ENCODE measurements at regions of chr3 and their contacts with region 1.

Region 1: GRCh38 chr3:158790901-158791589 is 10.8 kb upstream of the MFSD1 start:
- DNase-seq: peak in 4 of 9 experiments; percentile 17 to 75 (median 44)
- ATAC-seq: peak; percentile 65
- H3K4me3 ChIP-seq: no peak overlapping the region
- H3K4me3 Mint-ChIP-seq: no peak overlapping the region
- H3K27ac ChIP-seq: no peak overlapping the region
- H3K27ac Mint-ChIP-seq: no peak overlapping the region
- H3K4me1 ChIP-seq: peaks cover 3% of the 10 kb centered on the region
- H3K4me1 Mint-ChIP-seq: peaks cover 3% of the 10 kb centered on the region
- H3K27me3 ChIP-seq: no peaks in the 10 kb centered on the region
- H3K27me3 Mint-ChIP-seq: no peaks in the 10 kb centered on the region
- CTCF ChIP-seq: peak; percentile 85

Region 2: GRCh38 chr3:157606011-157606851 is 1184.8 kb before region 1 on chr3:
- CTCF ChIA-PET with region 1: no interaction called
- POLR2A ChIA-PET with region 1: no interaction called
- intact Hi-C with region 1: loop called in 1 of 2 experiments (anchors 5 kb)
- DNase-seq: peak; percentile 5 to 67 (median 55)
- ATAC-seq: peak; percentile 77
- H3K4me3 ChIP-seq: no peak overlapping the region
- H3K4me3 Mint-ChIP-seq: no peak overlapping the region
- H3K27ac ChIP-seq: no peak overlapping the region
- H3K27ac Mint-ChIP-seq: no peak overlapping the region
- H3K4me1 ChIP-seq: no peaks in the 10 kb centered on the region
- H3K4me1 Mint-ChIP-seq: peaks cover 8% of the 10 kb centered on the region
- H3K27me3 ChIP-seq: no peaks in the 10 kb centered on the region
- H3K27me3 Mint-ChIP-seq: peaks cover 6% of the 10 kb centered on the region
- CTCF ChIP-seq: peak; percentile 80

Region 3: GRCh38 chr3:157624801-157625200 is 1166.2 kb before region 1 on chr3:
- CTCF ChIA-PET with region 1: no interaction called
- POLR2A ChIA-PET with region 1: no interaction called
- intact Hi-C with region 1: loop called in 1 of 2 experiments (anchors 5 kb)
- DNase-seq: no peak
- ATAC-seq: no peak
- H3K4me3 ChIP-seq: no peak overlapping the region
- H3K4me3 Mint-ChIP-seq: no peak overlapping the region
- H3K27ac ChIP-seq: no peak overlapping the region
- H3K27ac Mint-ChIP-seq: no peak overlapping the region
- H3K4me1 ChIP-seq: no peaks in the 10 kb centered on the region
- H3K4me1 Mint-ChIP-seq: no peaks in the 10 kb centered on the region
- H3K27me3 ChIP-seq: no peaks in the 10 kb centered on the region
- H3K27me3 Mint-ChIP-seq: peaks cover 10% of the 10 kb centered on the region
- CTCF ChIP-seq: no peak

Region 4: GRCh38 chr3:158379517-158379916 is 411.5 kb before region 1 on chr3:
- CTCF ChIA-PET with region 1: no interaction called
- POLR2A ChIA-PET with region 1: no interaction called
- intact Hi-C with region 1: no loop called
- DNase-seq: no peak
- ATAC-seq: no peak
- H3K4me3 ChIP-seq: no peak overlapping the region
- H3K4me3 Mint-ChIP-seq: no peak overlapping the region
- H3K27ac ChIP-seq: no peak overlapping the region
- H3K27ac Mint-ChIP-seq: no peak overlapping the region
- H3K4me1 ChIP-seq: no peaks in the 10 kb centered on the region
- H3K4me1 Mint-ChIP-seq: no peaks in the 10 kb centered on the region
- H3K27me3 ChIP-seq: no peaks in the 10 kb centered on the region
- H3K27me3 Mint-ChIP-seq: no peaks in the 10 kb centered on the region
- CTCF ChIP-seq: no peak

Region 5: GRCh38 chr3:158539414-158540014 is 251.5 kb before region 1 on chr3:
- CTCF ChIA-PET with region 1: interaction called, 3 read pairs
- POLR2A ChIA-PET with region 1: no interaction called
- intact Hi-C with region 1: loop called (anchors 1 to 2 kb)
- DNase-seq: peak in 7 of 9 experiments; percentile 6 to 63 (median 32)
- ATAC-seq: no peak
- H3K4me3 ChIP-seq: no peak overlapping the region
- H3K4me3 Mint-ChIP-seq: no peak overlapping the region
- H3K27ac ChIP-seq: no peak overlapping the region
- H3K27ac Mint-ChIP-seq: no peak overlapping the region
- H3K4me1 ChIP-seq: no peaks in the 10 kb centered on the region
- H3K4me1 Mint-ChIP-seq: no peaks in the 10 kb centered on the region
- H3K27me3 ChIP-seq: no peaks in the 10 kb centered on the region
- H3K27me3 Mint-ChIP-seq: no peaks in the 10 kb centered on the region
- CTCF ChIP-seq: peak; percentile 61

Region 6: GRCh38 chr3:158659454-158660237 is 131.4 kb before region 1 on chr3:
- CTCF ChIA-PET with region 1: interaction called, 32 read pairs
- POLR2A ChIA-PET with region 1: interaction called, 5 read pairs
- intact Hi-C with region 1: loop called (anchors 1 kb)
- DNase-seq: peak in 6 of 9 experiments; percentile 16 to 60 (median 50)
- ATAC-seq: peak; percentile 83
- H3K4me3 ChIP-seq: no peak overlapping the region
- H3K4me3 Mint-ChIP-seq: no peak overlapping the region
- H3K27ac ChIP-seq: no peak overlapping the region
- H3K27ac Mint-ChIP-seq: no peak overlapping the region
- H3K4me1 ChIP-seq: no peaks in the 10 kb centered on the region
- H3K4me1 Mint-ChIP-seq: peaks cover 5% of the 10 kb centered on the region
- H3K27me3 ChIP-seq: no peaks in the 10 kb centered on the region
- H3K27me3 Mint-ChIP-seq: no peaks in the 10 kb centered on the region
- CTCF ChIP-seq: peak; percentile 52

Region 7: GRCh38 chr3:158672293-158673176 is 118.5 kb before region 1 on chr3 and contains the start of gene LXN:
- CTCF ChIA-PET with region 1: no interaction called
- POLR2A ChIA-PET with region 1: no interaction called
- intact Hi-C with region 1: loop called in 1 of 2 experiments (anchors 1 kb)
- DNase-seq: peak; percentile 43 to 88 (median 77)
- ATAC-seq: peak; percentile 99
- H3K4me3 ChIP-seq: peak within 1 kb of the TSS; percentile 54 to 61
- H3K4me3 Mint-ChIP-seq: peak within 1 kb of the TSS; percentile 93
- H3K27ac ChIP-seq: peak within 1 kb of the TSS; percentile 30 to 39
- H3K27ac Mint-ChIP-seq: peak within 1 kb of the TSS; percentile 90
- H3K4me1 ChIP-seq: peaks cover 8% of the 10 kb centered on the region
- H3K4me1 Mint-ChIP-seq: peaks cover 29% of the 10 kb centered on the region
- H3K27me3 ChIP-seq: no peaks in the 10 kb centered on the region
- H3K27me3 Mint-ChIP-seq: no peaks in the 10 kb centered on the region
- CTCF ChIP-seq: peak; percentile 57
- total RNA-seq, gene LXN: 1.00 to 1.1 TPM

Region 8: GRCh38 chr3:158727206-158728060 is 63.6 kb before region 1 on chr3:
- CTCF ChIA-PET with region 1: interaction called, 106 read pairs
- POLR2A ChIA-PET with region 1: no interaction called
- intact Hi-C with region 1: loop called (anchors 1 kb)
- DNase-seq: peak in 8 of 9 experiments; percentile 15 to 73 (median 44)
- ATAC-seq: peak; percentile 78
- H3K4me3 ChIP-seq: peak overlapping the region in 1 of 2 experiments; percentile 11
- H3K4me3 Mint-ChIP-seq: peak overlapping the region; percentile 52
- H3K27ac ChIP-seq: no peak overlapping the region
- H3K27ac Mint-ChIP-seq: peak overlapping the region; percentile 14
- H3K4me1 ChIP-seq: peaks cover 22% of the 10 kb centered on the region
- H3K4me1 Mint-ChIP-seq: peaks cover 32% of the 10 kb centered on the region
- H3K27me3 ChIP-seq: peaks cover 0 to 4% of the 10 kb centered on the region in 2 experiments
- H3K27me3 Mint-ChIP-seq: peaks cover 7% of the 10 kb centered on the region
- CTCF ChIP-seq: peak; percentile 67

Measured in CD8-positive, alpha-beta T cell (primary cell).